Activated CD8-positive, alpha-beta T cell treated with anti-CD3 and anti-CD28 coated beads for 36 hours (primary cell): ENCODE measurements at regions of chr1 and their contacts with region 1.

Region 1: DNA sequence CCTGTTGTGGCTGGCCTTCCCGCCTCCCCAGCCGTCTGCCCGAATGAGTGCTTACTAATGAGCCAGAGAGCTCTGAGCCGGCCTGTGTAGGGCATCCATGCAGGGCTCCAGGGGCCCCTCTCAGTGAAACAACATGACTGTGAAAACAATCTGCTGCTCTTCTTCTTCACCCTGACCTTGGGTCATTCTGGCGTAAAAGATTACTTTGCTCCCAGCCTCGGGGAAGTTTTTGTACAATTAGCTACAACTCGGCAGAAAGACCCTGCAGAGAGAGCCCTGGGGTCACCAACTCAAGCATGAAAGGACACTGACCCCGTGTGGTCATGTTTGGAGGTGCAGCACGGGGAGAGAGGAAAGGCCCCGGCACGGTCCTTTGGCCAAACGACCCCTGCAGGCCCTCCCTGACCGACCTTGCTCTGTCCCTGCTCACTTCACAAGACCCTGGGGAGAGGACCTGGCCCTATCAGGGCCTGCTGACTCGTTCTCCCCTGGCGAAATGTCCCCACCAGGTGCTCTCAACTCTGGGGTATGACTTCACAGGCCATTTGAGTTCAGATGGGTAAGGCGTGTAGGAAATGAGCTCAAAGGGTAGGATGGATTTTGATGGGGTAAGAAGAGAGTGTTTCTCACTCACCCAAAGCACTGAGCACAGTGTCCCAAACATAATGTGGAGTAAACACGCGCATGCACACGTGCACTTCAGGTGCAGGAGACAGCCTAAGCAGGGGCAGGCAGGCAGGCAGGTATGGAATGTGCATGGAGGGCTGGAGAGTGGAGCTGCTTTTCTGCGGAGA is 22.9 kb upstream of the FAM20B start:
- DNase-seq: peak; percentile 87
- ATAC-seq: peak; percentile 93
- H3K4me3 Mint-ChIP-seq: no peak overlapping the region
- H3K27ac Mint-ChIP-seq: peak overlapping the region; percentile 56
- H3K4me1 Mint-ChIP-seq: peaks cover 16% of the 10 kb centered on the region
- H3K27me3 Mint-ChIP-seq: no peaks in the 10 kb centered on the region
- CTCF ChIP-seq: peak; percentile 96

Region 2: DNA sequence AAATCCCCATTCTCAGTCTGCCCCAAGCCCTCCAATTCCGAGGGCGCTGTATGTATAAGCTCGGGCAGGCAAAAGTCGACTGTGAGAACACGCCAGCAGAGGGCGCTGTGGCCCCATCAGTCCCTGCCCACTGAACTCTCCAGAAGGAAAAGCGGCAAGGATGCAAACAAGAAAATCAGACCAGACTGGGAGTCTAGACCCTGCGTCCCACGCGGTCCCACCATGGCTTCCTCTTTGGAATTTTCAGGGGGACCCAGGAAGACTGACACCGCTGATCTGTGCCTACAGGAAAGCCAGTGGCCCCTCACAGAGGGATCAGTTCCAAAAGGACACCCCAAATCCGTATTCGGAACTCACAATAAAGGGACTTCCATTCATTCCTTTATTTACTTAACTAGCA is 470.4 kb before region 1 on chr1:
- CTCF ChIA-PET with region 1: interaction called, 29 read pairs
- POLR2A ChIA-PET with region 1: no interaction called
- intact Hi-C with region 1: loop called (anchors 5 kb)
- DNase-seq: peak; percentile 83
- ATAC-seq: peak; percentile 87
- H3K4me3 Mint-ChIP-seq: no peak overlapping the region
- H3K27ac Mint-ChIP-seq: no peak overlapping the region
- H3K4me1 Mint-ChIP-seq: no peaks in the 10 kb centered on the region
- H3K27me3 Mint-ChIP-seq: no peaks in the 10 kb centered on the region
- CTCF ChIP-seq: peak; percentile 86

Region 3: GRCh38 chr1:178749581-178750166 is 253.1 kb before region 1 on chr1:
- CTCF ChIA-PET with region 1: interaction called, 11 read pairs
- POLR2A ChIA-PET with region 1: no interaction called
- intact Hi-C with region 1: no loop called
- DNase-seq: no peak
- ATAC-seq: no peak
- H3K4me3 Mint-ChIP-seq: no peak overlapping the region
- H3K27ac Mint-ChIP-seq: no peak overlapping the region
- H3K4me1 Mint-ChIP-seq: peaks cover 3% of the 10 kb centered on the region
- H3K27me3 Mint-ChIP-seq: no peaks in the 10 kb centered on the region
- CTCF ChIP-seq: no peak

Region 4: GRCh38 chr1:178774263-178774662 is 228.5 kb before region 1 on chr1:
- CTCF ChIA-PET with region 1: interaction called, 116 read pairs
- POLR2A ChIA-PET with region 1: no interaction called
- intact Hi-C with region 1: loop called (anchors 2 kb)
- DNase-seq: no peak
- ATAC-seq: no peak
- H3K4me3 Mint-ChIP-seq: no peak overlapping the region
- H3K27ac Mint-ChIP-seq: no peak overlapping the region
- H3K4me1 Mint-ChIP-seq: no peaks in the 10 kb centered on the region
- H3K27me3 Mint-ChIP-seq: no peaks in the 10 kb centered on the region
- CTCF ChIP-seq: no peak

Region 5: GRCh38 chr1:178810585-178810984 is 192.2 kb before region 1 on chr1:
- CTCF ChIA-PET with region 1: interaction called, 23 read pairs
- POLR2A ChIA-PET with region 1: no interaction called
- intact Hi-C with region 1: no loop called
- DNase-seq: no peak
- ATAC-seq: no peak
- H3K4me3 Mint-ChIP-seq: no peak overlapping the region
- H3K27ac Mint-ChIP-seq: no peak overlapping the region
- H3K4me1 Mint-ChIP-seq: no peaks in the 10 kb centered on the region
- H3K27me3 Mint-ChIP-seq: no peaks in the 10 kb centered on the region
- CTCF ChIP-seq: no peak

Region 6: GRCh38 chr1:179025125-179025974 is 22.6 kb after region 1 on chr1 and contains the start of gene FAM20B:
- CTCF ChIA-PET with region 1: interaction called, 12 read pairs
- POLR2A ChIA-PET with region 1: no interaction called
- intact Hi-C with region 1: no loop called
- DNase-seq: peak; percentile 91
- ATAC-seq: peak; percentile 89
- H3K4me3 Mint-ChIP-seq: peak within 1 kb of the TSS; percentile 99
- H3K27ac Mint-ChIP-seq: peak within 1 kb of the TSS; percentile 97
- H3K4me1 Mint-ChIP-seq: peaks cover 30% of the 10 kb centered on the region
- H3K27me3 Mint-ChIP-seq: no peaks in the 10 kb centered on the region
- CTCF ChIP-seq: no peak
- total RNA-seq, gene FAM20B: 34.7 to 36.1 TPM